ENCODE measurements at regions of chr5 and their contacts with region 1.

Region 1: DNA sequence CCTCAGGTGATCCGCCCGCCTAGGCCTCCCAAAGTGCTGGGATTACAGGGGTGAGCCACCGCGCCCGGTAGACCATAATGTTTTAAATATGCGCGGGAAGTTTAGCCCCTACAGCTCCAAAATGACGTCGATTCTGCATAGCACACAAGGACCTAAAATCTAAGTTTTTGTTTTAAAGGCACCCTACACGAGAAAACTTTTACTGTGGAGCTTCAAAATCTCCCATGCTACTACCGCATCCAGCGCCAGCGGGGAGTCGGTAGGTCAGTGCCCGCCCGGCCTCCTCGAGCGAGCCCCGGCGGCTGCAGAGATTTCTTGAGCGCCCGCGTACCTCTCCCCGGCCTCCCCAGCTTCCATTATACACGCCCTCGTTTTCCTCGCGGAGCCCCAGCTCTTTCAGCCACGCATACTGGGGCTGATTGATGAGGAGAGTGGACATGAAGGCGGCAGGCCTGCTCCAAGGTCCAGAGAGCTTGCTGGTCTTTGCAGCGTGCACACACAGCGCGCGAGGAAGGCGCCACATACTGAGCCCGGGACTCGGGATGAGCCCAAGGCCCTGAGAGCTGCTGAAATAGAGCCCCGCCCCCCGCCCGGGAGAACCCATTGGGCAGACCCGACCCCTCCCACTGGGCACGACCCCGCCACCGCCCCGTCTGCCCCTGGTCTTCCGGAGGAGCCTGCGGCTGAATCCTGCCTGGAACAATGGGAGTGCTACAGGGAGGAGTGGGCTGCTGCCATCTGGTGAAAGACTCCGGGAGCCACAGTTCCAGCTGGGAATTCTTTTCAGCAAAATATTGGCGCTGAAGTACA is at the start of gene ALDH7A1:
- DNase-seq: peak; percentile 95
- ATAC-seq: peak; percentile 95
- H3K4me3 ChIP-seq: peak within 1 kb of the TSS; percentile 75 to 85 (median 76)
- H3K27ac ChIP-seq: peak within 1 kb of the TSS; percentile 86
- H3K4me1 ChIP-seq: peaks cover 48% of the 10 kb centered on the region
- H3K27me3 ChIP-seq: no peaks in the 10 kb centered on the region; a peak in 1 of 5 replicates
- CTCF ChIP-seq: peak; percentile 82
- EP300 ChIP-seq: peak in 1 of 2 experiments; percentile 21; a peak in 1 of 4 replicates
- POLR2A ChIP-seq: peak; percentile 94 to 98
- RAD21 ChIP-seq: peak; percentile 59
- total RNA-seq, gene ALDH7A1: 69.0 and 132 TPM in 2 replicates

Region 2: GRCh38 chr5:125713109-125713805 is 881.6 kb before region 1 on chr5:
- CTCF ChIA-PET with region 1: no interaction called
- POLR2A ChIA-PET with region 1: no interaction called
- in situ Hi-C with region 1: no loop called
- intact Hi-C with region 1: loop called (anchors 5 kb)
- DNase-seq: no peak
- ATAC-seq: no peak
- H3K4me3 ChIP-seq: no peak overlapping the region
- H3K27ac ChIP-seq: no peak overlapping the region
- H3K4me1 ChIP-seq: peaks cover 30% of the 10 kb centered on the region
- H3K27me3 ChIP-seq: no peaks in the 10 kb centered on the region
- CTCF ChIP-seq: no peak
- EP300 ChIP-seq: no peak
- POLR2A ChIP-seq: no peak
- RAD21 ChIP-seq: no peak

Region 3: GRCh38 chr5:126354012-126354857 is 240.6 kb before region 1 on chr5:
- CTCF ChIA-PET with region 1: no interaction called
- POLR2A ChIA-PET with region 1: no interaction called
- in situ Hi-C with region 1: no loop called
- intact Hi-C with region 1: loop called (anchors 1 kb)
- DNase-seq: peak; percentile 58
- ATAC-seq: peak; percentile 85
- H3K4me3 ChIP-seq: peak overlapping the region in 2 of 3 experiments; percentile 12 to 38; a peak in 3 of 6 replicates
- H3K27ac ChIP-seq: no peak overlapping the region
- H3K4me1 ChIP-seq: peaks cover 39% of the 10 kb centered on the region
- H3K27me3 ChIP-seq: no peaks in the 10 kb centered on the region; a peak in 1 of 5 replicates
- CTCF ChIP-seq: peak; percentile 83
- EP300 ChIP-seq: no peak
- POLR2A ChIP-seq: no peak
- RAD21 ChIP-seq: peak; percentile 67

Region 4: DNA sequence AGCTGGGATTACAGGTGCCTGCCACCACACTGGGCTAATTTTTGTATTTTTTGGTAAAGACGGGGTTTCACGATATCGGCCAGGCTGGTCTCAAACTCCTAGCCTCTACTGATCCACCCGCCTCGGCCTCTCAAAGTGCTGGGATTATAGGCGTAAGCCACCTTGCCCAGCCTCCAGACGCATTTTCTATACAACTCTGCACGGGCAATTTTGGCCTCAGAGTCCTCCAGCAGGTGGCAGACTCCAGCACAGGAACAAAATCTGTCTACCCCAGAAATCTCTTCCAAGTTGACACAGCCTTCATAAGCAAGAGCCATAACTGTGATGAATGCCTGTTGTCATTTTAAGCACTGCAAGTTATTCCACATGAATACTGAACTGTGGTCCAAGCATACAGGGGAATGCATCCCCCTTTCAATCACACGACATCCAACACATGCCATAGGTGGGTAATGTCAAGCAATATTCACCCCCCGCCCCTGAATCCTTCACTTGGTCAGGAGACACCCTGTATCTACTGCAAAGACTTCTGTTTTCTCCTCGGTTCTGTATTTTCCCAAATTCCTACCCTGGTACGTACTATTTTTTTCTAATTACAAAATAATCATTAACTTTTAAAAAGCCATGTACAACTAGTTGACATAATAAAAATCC is 50.7 kb before region 1 on chr5:
- CTCF ChIA-PET with region 1: interaction called, 6 read pairs
- POLR2A ChIA-PET with region 1: interaction called, 16 read pairs
- in situ Hi-C with region 1: no loop called
- intact Hi-C with region 1: loop called (anchors 1 kb)
- DNase-seq: peak; percentile 58
- ATAC-seq: peak; percentile 86
- H3K4me3 ChIP-seq: no peak overlapping the region
- H3K27ac ChIP-seq: peak overlapping the region; percentile 60
- H3K4me1 ChIP-seq: peaks cover 26% of the 10 kb centered on the region
- H3K27me3 ChIP-seq: no peaks in the 10 kb centered on the region
- CTCF ChIP-seq: peak; percentile 79
- EP300 ChIP-seq: no peak
- POLR2A ChIP-seq: no peak
- RAD21 ChIP-seq: peak; percentile 57; the same call in 1 of the 2 replicates

Region 5: DNA sequence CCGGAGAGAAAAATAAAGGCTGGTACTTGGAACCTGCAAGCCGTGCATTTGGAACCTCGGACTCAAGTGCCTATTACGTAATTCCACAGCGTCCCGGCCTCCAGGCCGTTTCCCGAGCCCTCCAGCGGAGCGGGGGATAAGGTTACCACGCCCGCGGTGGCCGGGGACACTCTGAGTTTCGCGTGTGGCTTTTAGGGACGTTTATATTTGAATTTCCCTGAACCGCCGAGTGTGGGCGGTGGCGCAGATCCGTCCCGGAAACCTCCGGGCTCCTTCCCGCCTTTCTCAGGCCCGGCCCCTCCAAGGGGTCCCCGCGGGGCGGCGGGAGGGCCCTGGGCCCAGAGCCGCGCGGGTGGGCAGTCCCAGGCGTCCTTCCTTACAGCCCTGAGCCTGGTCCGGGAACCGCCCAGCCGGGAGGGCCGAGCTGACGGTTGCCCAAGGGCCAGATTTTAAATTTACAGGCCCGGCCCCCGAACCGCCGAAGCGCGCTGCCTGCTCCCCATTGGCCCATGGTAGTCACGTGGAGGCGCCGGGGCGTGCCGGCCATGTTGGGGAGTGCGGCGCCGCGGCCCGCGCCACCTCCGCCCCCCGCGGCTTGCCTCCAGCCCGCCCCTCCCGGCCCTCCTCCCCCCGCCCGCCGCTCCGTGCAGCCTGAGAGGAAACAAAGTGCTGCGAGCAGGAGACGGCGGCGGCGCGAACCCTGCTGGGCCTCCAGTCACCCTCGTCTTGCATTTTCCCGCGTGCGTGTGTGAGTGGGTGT is 181.8 kb after region 1 on chr5 and contains the start of gene LMNB1:
- CTCF ChIA-PET with region 1: no interaction called
- POLR2A ChIA-PET with region 1: interaction called, 12 read pairs
- in situ Hi-C with region 1: no loop called
- intact Hi-C with region 1: loop called (anchors 5 kb)
- DNase-seq: peak; percentile 92
- ATAC-seq: peak; percentile 85
- H3K4me3 ChIP-seq: peak within 1 kb of the TSS; percentile 88 to 97 (median 91)
- H3K27ac ChIP-seq: peak within 1 kb of the TSS; percentile 95
- H3K4me1 ChIP-seq: peaks cover 32% of the 10 kb centered on the region
- H3K27me3 ChIP-seq: no peaks in the 10 kb centered on the region; a peak in 1 of 5 replicates
- CTCF ChIP-seq: peak; percentile 15; the same call in 1 of the 2 replicates
- EP300 ChIP-seq: peak; percentile 7 to 29; a peak in 1 of 4 replicates
- POLR2A ChIP-seq: peak; percentile 60 to 78
- RAD21 ChIP-seq: peak; percentile 36
- total RNA-seq, gene LMNB1: 159 and 197 TPM in 2 replicates